CD4-positive, alpha-beta T cell (primary cell): ENCODE measurements at regions of chr7 and their contacts with region 1.

Region 1: DNA sequence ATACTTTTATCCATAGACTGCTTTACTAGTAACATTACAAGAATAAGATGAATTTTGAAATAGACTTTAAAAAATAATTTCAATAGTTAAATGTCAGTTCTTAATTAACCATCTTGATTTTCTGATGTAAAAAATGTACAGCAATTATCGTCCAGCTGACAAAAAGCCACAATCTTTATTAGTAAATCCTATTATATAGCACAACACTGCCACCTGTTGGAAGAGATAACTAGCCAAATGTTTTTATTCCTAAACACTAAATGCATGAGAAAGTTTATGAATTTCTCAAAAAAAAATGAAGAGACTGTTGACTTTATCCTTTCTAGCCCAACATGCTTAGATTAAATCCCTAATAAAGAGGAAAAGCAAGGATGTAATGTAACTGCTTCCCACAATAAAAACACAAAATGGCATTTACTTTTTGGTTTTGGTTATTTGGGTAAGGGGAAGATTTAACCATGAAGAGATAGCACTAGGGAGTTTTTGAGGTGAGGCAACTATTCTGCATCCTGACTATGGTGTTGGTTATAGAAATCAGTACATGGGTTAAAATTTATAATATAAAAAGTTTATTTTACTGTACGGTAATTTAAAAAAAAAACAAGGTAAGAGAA is 8.0 kb downstream of the COA1 start:
- DNase-seq: peak in 4 of 14 experiments; percentile 25 to 78 (median 74)
- ATAC-seq: peak; percentile 48
- H3K4me3 ChIP-seq: no peak overlapping the region
- H3K4me3 Mint-ChIP-seq: no peak overlapping the region
- H3K27ac ChIP-seq: no peak overlapping the region
- H3K27ac Mint-ChIP-seq: peak overlapping the region; percentile 0
- H3K4me1 ChIP-seq: peaks cover 8% of the 10 kb centered on the region
- H3K4me1 Mint-ChIP-seq: peaks cover 71% of the 10 kb centered on the region
- H3K27me3 ChIP-seq: no peaks in the 10 kb centered on the region
- H3K27me3 Mint-ChIP-seq: no peaks in the 10 kb centered on the region
- CTCF ChIP-seq: peak; percentile 96

Region 2: DNA sequence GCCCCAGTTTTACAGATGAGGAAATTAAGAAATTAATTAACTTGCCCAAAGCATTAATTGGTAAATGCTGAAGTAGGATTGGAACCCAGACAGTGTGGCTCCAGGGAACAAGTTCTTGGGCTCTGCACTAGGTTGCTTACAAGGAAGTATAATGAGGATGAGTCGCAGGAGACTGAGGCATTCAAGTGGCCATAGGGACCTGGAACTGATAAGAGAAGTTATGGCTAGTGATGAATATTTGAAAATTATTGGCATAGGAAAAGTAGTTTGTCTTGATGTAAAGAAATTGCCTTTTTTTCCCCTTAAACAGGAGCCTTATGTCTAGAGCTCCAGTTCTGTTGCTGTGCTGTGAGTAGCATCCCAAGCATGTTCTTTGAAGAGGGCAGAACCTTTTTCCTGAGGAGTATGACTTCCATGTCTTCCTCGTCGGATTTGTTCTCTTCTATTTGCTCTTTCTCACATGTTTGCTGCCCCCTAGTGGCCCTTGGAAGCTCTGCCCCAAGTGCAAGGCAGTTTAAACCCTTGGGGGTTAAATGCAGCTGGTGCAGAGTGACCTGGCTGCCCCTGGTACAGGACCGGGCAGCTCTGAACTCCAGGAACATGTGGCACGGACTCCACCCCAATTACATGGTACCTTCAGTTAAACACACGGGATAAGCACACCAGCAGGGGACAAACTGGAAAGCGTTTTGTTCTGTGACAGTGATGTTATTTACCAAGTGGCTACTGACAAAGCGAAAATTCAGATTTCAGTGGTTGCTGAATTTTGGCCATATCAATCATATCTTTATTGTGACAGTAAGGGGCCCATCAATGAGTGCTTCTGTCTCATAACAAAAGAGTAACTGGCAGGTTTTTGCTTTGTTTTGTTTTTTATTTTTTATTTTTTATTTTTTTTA is 460.1 kb before region 1 on chr7:
- CTCF ChIA-PET with region 1: no interaction called
- POLR2A ChIA-PET with region 1: no interaction called
- intact Hi-C with region 1: loop called in 1 of 2 experiments (anchors 2 kb)
- DNase-seq: peak; percentile 24 to 74 (median 40)
- ATAC-seq: peak; percentile 32
- H3K4me3 ChIP-seq: no peak overlapping the region
- H3K4me3 Mint-ChIP-seq: no peak overlapping the region
- H3K27ac ChIP-seq: no peak overlapping the region
- H3K27ac Mint-ChIP-seq: no peak overlapping the region
- H3K4me1 ChIP-seq: peaks cover 4% of the 10 kb centered on the region
- H3K4me1 Mint-ChIP-seq: no peaks in the 10 kb centered on the region
- H3K27me3 ChIP-seq: peaks cover 2 to 4% of the 10 kb centered on the region in 2 experiments
- H3K27me3 Mint-ChIP-seq: peaks cover 24% of the 10 kb centered on the region
- CTCF ChIP-seq: peak; percentile 89

Region 3: GRCh38 chr7:44595934-44596635 is 874.8 kb after region 1 on chr7:
- CTCF ChIA-PET with region 1: no interaction called
- POLR2A ChIA-PET with region 1: no interaction called
- intact Hi-C with region 1: no loop called
- DNase-seq: no peak
- ATAC-seq: no peak
- H3K4me3 ChIP-seq: no peak overlapping the region
- H3K4me3 Mint-ChIP-seq: no peak overlapping the region
- H3K27ac ChIP-seq: no peak overlapping the region
- H3K27ac Mint-ChIP-seq: no peak overlapping the region
- H3K4me1 ChIP-seq: no peaks in the 10 kb centered on the region
- H3K4me1 Mint-ChIP-seq: no peaks in the 10 kb centered on the region
- H3K27me3 ChIP-seq: no peaks in the 10 kb centered on the region
- H3K27me3 Mint-ChIP-seq: no peaks in the 10 kb centered on the region
- CTCF ChIP-seq: no peak

Region 4: DNA sequence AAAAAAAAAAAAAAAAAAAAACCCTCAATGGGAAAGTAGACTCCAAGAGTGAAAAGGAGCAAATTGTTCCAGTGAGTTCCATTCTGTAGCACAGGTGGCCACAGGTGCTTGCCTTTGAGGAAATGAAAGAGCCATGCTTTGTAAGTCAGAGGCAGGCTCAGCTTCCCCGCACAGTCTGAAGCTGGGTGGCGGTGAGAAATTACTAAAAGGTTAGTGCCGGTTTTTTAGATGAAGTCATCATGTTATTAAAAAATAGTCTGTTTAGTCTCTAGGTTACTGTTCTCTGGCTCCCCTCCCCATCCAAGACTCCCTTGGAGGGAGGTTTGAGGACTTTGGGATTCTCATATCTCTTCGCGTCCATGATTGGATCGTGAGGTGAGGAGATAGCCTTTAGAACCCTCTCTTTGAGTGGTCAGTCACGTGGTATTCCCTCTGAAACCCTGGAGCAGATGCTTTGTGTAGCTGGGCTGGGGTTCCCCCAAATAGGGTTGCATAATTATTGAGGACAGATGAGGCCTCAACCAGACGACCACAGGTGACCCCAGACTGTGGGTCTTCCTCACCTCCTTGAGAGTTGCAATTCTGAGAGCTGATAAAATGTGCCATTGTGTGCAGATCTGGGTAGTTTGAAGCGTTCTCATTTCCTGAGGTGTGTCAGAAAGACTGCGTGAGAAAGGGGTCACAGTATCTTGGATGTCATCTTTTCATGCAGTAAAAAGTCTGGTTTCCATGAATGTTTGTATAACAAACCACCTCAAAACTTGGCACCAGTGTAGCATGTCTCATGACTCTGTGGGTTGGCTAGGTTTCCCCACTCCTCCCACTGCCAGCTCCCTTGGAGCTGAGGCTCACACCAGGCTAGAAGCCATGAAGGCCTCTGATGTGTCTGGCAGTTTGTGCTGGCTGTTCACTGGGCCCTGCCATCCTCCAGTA is 912.2 kb after region 1 on chr7:
- CTCF ChIA-PET with region 1: no interaction called
- POLR2A ChIA-PET with region 1: no interaction called
- intact Hi-C with region 1: no loop called
- DNase-seq: peak in 12 of 14 experiments; percentile 29 to 92 (median 59)
- ATAC-seq: peak; percentile 47
- H3K4me3 ChIP-seq: no peak overlapping the region
- H3K4me3 Mint-ChIP-seq: peak overlapping the region; percentile 78
- H3K27ac ChIP-seq: peak overlapping the region; percentile 87 to 91
- H3K27ac Mint-ChIP-seq: peak overlapping the region; percentile 96
- H3K4me1 ChIP-seq: peaks cover 100% of the 10 kb centered on the region
- H3K4me1 Mint-ChIP-seq: peaks cover 81% of the 10 kb centered on the region
- H3K27me3 ChIP-seq: no peaks in the 10 kb centered on the region
- H3K27me3 Mint-ChIP-seq: no peaks in the 10 kb centered on the region
- CTCF ChIP-seq: no peak